Activated naive CD4-positive, alpha-beta T cell treated with anti-CD3 and anti-CD28 coated beads for 36 hours (primary cell): ENCODE measurements at regions of chr10 and their contacts with region 1.

Region 1: DNA sequence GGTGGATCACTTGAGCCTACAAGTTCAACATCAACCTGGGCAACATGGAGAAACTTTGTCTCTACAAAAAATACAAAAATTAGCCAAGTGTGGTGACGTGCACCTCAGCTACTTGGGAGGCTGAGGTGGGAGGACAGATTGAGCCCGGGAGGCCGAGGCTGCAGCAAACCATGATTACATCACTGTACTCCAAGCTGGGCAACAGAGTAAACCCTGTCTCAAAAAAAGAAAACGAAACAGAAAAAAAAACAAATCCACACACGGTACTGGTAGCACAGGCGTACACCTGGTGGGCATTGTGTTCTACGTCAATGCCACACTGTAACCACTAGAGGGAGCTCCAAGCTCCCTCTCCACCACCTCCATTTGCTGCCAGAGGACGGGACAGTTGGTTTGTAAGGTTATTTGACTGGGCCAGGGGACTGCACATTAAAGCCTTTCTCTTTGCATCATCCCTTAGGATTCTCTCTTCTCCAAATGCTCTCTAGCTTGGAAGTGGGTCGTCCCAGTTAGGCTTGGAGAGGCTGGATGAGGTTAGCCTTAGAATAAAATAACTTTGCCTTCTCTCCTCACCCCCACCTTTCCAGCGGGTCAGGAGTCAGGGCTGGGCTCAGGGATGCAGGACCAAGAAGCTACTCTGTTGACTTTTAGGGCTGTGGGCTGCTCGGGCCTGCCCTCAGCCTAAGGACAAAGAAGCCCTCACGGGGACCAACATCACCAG is 130.8 kb downstream of the SORBS1 start:
- DNase-seq: peak; percentile 51
- H3K4me3 Mint-ChIP-seq: no peak overlapping the region
- H3K27ac Mint-ChIP-seq: no peak overlapping the region
- H3K4me1 Mint-ChIP-seq: no peaks in the 10 kb centered on the region
- H3K27me3 Mint-ChIP-seq: no peaks in the 10 kb centered on the region

Region 2: GRCh38 chr10:95411635-95412034 is 18.8 kb before region 1 on chr10:
- CTCF ChIA-PET with region 1: interaction called, 15 read pairs
- intact Hi-C with region 1: no loop called
- DNase-seq: no peak
- H3K4me3 Mint-ChIP-seq: no peak overlapping the region
- H3K27ac Mint-ChIP-seq: no peak overlapping the region
- H3K4me1 Mint-ChIP-seq: no peaks in the 10 kb centered on the region
- H3K27me3 Mint-ChIP-seq: no peaks in the 10 kb centered on the region

Region 3: GRCh38 chr10:95440756-95441546 is 10.6 kb after region 1 on chr10:
- CTCF ChIA-PET with region 1: interaction called, 59 read pairs
- intact Hi-C with region 1: no loop called
- DNase-seq: no peak
- H3K4me3 Mint-ChIP-seq: no peak overlapping the region
- H3K27ac Mint-ChIP-seq: no peak overlapping the region
- H3K4me1 Mint-ChIP-seq: no peaks in the 10 kb centered on the region
- H3K27me3 Mint-ChIP-seq: peaks cover 3% of the 10 kb centered on the region

Region 4: DNA sequence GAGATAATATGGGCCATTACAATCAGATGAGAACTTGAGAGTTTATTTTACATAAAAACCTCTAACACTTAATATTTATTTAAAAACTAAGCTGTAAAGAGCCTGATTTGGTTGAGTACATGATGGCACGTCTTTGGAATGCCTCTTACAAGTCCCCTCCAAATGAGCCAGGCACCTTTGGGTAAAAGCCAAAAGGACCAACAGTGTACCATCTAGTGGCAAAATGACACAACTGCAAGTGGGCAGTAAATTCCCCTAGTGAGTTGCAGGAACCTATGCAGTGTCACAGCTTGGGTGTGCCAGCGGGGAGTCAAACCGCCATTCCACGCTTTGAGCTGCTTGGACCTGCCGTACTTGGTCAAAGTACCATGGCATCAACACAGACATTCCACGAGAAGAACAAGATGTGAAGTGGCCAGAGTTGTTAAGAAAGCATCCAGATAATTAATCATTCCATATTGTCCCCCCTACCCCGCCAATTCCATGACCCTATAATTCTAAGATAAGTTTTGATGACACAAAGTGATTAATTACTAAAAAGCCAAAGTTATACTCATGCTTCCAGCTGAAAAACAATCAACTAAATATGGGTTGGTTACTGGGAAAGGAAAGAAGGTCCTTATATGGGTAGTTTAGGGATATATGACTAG is 15.6 kb after region 1 on chr10:
- CTCF ChIA-PET with region 1: interaction called, 59 read pairs
- intact Hi-C with region 1: no loop called
- DNase-seq: peak; percentile 54
- H3K4me3 Mint-ChIP-seq: no peak overlapping the region
- H3K27ac Mint-ChIP-seq: no peak overlapping the region
- H3K4me1 Mint-ChIP-seq: no peaks in the 10 kb centered on the region
- H3K27me3 Mint-ChIP-seq: peaks cover 3% of the 10 kb centered on the region

Region 5: DNA sequence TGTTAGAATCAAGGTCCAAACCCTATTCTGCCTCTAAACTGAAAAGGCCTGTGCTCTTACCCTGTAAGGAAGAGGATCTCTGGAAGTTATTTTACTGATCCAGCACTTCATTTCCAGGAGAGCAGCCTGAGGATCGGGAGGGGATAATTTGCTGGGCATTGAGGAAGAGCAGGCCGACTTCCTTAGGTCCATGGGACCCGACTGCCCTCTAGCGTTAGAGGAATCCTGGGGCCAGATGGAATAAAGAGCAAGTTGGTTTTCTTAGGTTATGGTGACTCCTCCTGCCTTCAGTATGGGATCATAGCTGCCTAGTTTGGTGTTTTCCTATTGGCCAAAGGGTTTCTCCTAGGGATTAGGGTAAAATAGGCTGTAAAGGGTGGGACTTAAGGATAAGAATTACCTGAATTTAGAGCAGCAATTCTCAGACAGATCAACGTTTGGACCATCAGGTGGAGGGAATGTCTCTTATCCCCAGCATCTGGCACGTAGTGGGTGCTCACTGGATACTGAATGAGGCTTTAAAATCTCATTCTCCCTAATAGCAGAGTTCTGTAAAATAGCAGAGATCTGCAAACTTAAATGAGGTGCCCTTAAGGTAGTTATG is 170.8 kb after region 1 on chr10:
- CTCF ChIA-PET with region 1: interaction called, 103 read pairs
- intact Hi-C with region 1: loop called (anchors 1 kb)
- DNase-seq: peak; percentile 68
- H3K4me3 Mint-ChIP-seq: no peak overlapping the region
- H3K27ac Mint-ChIP-seq: no peak overlapping the region
- H3K4me1 Mint-ChIP-seq: no peaks in the 10 kb centered on the region
- H3K27me3 Mint-ChIP-seq: no peaks in the 10 kb centered on the region

Region 6: GRCh38 chr10:95841661-95842498 is 411.5 kb after region 1 on chr10:
- CTCF ChIA-PET with region 1: interaction called, 3 read pairs
- intact Hi-C with region 1: loop called (anchors 1 kb)
- DNase-seq: peak; percentile 67
- H3K4me3 Mint-ChIP-seq: no peak overlapping the region
- H3K27ac Mint-ChIP-seq: no peak overlapping the region
- H3K4me1 Mint-ChIP-seq: no peaks in the 10 kb centered on the region
- H3K27me3 Mint-ChIP-seq: peaks cover 6% of the 10 kb centered on the region